Left cardiac atrium (tissue), 4 donors: ENCODE measurements at regions of chr4 and their contacts with region 1.

Region 1: GRCh38 chr4:138405934-138406567 is 163.9 kb upstream of the SLC7A11 start:
- DNase-seq: no peak
- ATAC-seq: peak; percentile 53 to 59

Region 2: GRCh38 chr4:138199568-138200235 is 206.3 kb before region 1 on chr4:
- intact Hi-C with region 1: loop called in 1 of 2 experiments (anchors 10 kb)
- DNase-seq: no peak
- ATAC-seq: no peak